ENCODE measurements at regions of chr1 and their contacts with region 1.

Region 1: GRCh38 chr1:223748773-223749733 is 36.7 kb downstream of the CAPN2 start:
- DNase-seq: peak; percentile 78
- ATAC-seq: peak; percentile 70
- H3K4me3 Mint-ChIP-seq: peak overlapping the region; percentile 53
- H3K27ac Mint-ChIP-seq: no peak overlapping the region
- H3K4me1 Mint-ChIP-seq: peaks cover 14% of the 10 kb centered on the region
- H3K27me3 Mint-ChIP-seq: no peaks in the 10 kb centered on the region

Region 2: DNA sequence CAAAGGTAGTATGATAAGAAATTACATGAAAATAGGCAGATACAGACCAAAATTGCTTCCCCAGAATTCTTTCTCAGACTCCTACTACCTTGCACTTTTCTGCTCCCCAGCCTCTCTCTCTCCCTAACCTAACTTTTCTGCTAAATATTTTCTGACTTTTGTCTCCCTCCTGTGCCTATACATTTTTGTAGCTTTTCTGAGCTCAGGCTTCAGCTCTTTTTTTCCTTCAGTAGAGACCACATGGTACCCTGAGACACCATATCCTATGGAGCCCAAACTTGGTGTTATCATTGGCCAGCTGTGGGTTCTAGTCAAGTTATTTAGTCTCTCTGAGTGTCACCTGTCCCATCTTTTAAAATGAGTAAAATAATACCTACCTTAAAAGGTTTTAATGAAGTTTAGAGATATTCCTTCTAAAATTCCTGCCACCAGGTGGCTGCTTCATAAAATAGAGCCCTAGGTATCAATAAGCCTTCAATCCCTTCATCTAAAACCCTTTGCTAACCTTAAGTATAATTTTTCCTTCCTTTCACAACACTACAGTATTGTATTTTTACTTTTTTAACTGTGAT is 1769.5 kb before region 1 on chr1:
- CTCF ChIA-PET with region 1: no interaction called
- POLR2A ChIA-PET with region 1: no interaction called
- intact Hi-C with region 1: no loop called
- DNase-seq: no peak
- ATAC-seq: no peak
- H3K4me3 Mint-ChIP-seq: no peak overlapping the region
- H3K27ac Mint-ChIP-seq: no peak overlapping the region
- H3K4me1 Mint-ChIP-seq: peaks cover 2% of the 10 kb centered on the region
- H3K27me3 Mint-ChIP-seq: peaks cover 5% of the 10 kb centered on the region

Region 3: DNA sequence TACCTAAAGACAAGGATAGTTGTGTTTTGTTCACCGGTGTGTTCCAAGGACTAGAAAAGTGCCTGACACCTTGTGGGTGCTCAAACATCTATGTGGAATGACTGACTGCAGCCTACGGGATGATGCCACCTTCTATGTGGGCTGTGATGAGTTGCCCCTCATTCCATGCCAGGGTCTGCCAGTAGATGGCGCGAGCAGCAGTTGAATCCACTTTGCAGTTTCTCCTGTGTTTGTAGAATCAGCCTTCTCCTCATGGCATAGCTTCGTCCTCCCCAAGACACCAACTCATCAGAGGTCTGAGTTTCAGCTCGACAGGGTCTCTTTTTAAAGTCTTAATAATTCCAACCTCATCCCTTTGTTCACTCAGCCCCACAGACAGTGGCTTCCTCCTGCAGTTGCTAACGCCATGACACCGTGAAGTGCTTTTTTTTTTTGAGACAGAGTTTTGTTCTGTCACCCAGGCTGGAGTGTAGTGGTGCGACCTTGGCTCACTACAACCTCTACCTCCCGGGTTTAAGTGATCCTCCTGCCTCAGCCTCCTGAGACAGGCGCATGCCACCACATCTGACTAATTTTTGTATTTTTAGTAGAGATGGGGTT is 217.2 kb before region 1 on chr1:
- CTCF ChIA-PET with region 1: no interaction called
- POLR2A ChIA-PET with region 1: no interaction called
- intact Hi-C with region 1: loop called in 1 of 2 experiments (anchors 5 kb)
- DNase-seq: peak; percentile 81
- ATAC-seq: peak; percentile 85
- H3K4me3 Mint-ChIP-seq: no peak overlapping the region
- H3K27ac Mint-ChIP-seq: no peak overlapping the region
- H3K4me1 Mint-ChIP-seq: peaks cover 6% of the 10 kb centered on the region
- H3K27me3 Mint-ChIP-seq: no peaks in the 10 kb centered on the region

Region 4: GRCh38 chr1:223700942-223701637 is 48.0 kb before region 1 on chr1:
- CTCF ChIA-PET with region 1: interaction called, 95 read pairs
- POLR2A ChIA-PET with region 1: interaction called, 4 read pairs
- intact Hi-C with region 1: loop called (anchors 1 kb)
- DNase-seq: peak; percentile 59
- ATAC-seq: peak; percentile 75
- H3K4me3 Mint-ChIP-seq: no peak overlapping the region
- H3K27ac Mint-ChIP-seq: peak overlapping the region; percentile 55
- H3K4me1 Mint-ChIP-seq: peaks cover 34% of the 10 kb centered on the region
- H3K27me3 Mint-ChIP-seq: peaks cover 4% of the 10 kb centered on the region

Region 5: DNA sequence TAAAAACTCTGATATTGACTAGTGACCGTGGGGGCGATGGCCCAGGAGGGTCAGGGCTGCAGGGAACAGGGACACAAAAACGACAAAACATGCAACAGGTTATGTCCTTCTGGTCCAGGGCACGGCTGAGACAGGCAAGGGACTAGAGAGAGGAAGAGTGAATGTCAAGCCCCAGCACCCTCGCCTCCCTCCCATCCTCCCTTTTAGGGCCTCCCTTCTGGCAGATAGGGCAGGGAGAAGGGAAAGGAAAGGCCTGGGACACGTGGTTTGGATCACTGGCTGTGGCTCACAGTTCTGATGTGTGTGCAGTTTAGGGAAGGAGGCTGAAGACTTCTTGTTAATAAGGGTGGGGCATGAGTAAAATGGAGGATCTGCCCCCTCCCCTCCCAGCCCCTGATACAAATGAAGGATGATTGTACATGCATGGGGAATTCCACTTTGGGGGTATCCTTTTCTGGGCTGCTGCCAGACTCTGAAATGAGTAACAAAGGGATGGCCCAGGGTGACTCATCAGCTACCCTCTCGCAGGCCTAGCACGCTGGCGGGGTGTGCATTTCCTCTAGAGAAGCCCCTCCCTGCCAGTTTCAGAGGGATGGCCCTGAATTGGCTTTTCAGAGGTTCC is 22.6 kb before region 1 on chr1:
- CTCF ChIA-PET with region 1: interaction called, 39 read pairs
- POLR2A ChIA-PET with region 1: interaction called, 5 read pairs
- intact Hi-C with region 1: loop called (anchors 1 to 2 kb)
- DNase-seq: peak; percentile 94
- ATAC-seq: peak; percentile 98
- H3K4me3 Mint-ChIP-seq: peak overlapping the region; percentile 44
- H3K27ac Mint-ChIP-seq: peak overlapping the region; percentile 87
- H3K4me1 Mint-ChIP-seq: peaks cover 63% of the 10 kb centered on the region
- H3K27me3 Mint-ChIP-seq: no peaks in the 10 kb centered on the region

Region 6: DNA sequence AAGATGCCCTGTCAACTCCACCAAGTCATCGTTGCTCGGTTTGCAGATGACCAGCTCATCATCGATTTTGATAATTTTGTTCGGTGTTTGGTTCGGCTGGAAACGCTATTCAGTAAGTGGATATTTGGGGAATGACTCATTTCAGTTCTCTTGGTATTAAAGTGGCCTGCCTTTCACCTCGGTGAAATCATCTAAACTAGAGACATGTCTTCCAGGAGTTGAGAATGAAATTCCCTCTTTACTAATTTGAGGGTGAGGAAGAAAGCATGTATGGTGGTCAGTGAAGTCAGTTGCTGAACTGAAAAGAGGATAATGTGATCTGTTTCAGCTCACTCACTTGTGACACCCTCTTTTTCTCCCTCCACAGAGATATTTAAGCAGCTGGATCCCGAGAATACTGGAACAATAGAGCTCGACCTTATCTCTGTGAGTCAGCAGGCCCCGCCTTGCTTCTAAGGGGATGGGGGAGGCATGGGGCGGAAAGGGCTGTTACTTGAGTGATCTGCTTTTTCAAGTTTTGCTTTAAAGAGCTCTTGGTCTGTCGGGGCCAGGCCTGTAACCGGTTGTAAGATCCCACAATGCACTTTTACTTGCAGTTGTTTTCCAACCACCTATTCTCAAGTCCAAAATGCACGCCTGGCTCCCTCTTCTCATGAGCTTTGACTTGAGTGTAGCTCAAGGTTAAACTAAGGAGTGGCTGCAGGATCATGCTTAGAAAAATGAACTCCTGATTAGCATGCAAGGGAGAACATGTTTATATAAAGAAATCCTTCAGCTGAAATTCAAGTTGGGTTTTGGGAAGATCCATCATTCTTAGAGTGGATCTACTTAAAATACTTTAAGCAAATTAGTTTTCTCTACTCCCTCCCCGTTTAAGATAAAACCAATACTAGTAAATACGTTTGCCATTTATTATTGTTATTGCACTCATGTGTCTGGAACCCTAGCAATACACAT is 23.0 kb after region 1 on chr1:
- CTCF ChIA-PET with region 1: interaction called, 10 read pairs
- POLR2A ChIA-PET with region 1: interaction called, 3 read pairs
- intact Hi-C with region 1: no loop called
- DNase-seq: peak; percentile 32
- ATAC-seq: peak; percentile 31
- H3K4me3 Mint-ChIP-seq: no peak overlapping the region
- H3K27ac Mint-ChIP-seq: peak overlapping the region; percentile 45
- H3K4me1 Mint-ChIP-seq: peaks cover 42% of the 10 kb centered on the region
- H3K27me3 Mint-ChIP-seq: no peaks in the 10 kb centered on the region